Dorsolateral prefrontal cortex (tissue), 120 donors: ENCODE measurements at regions of chr5 and their contacts with region 1.

Region 1: DNA sequence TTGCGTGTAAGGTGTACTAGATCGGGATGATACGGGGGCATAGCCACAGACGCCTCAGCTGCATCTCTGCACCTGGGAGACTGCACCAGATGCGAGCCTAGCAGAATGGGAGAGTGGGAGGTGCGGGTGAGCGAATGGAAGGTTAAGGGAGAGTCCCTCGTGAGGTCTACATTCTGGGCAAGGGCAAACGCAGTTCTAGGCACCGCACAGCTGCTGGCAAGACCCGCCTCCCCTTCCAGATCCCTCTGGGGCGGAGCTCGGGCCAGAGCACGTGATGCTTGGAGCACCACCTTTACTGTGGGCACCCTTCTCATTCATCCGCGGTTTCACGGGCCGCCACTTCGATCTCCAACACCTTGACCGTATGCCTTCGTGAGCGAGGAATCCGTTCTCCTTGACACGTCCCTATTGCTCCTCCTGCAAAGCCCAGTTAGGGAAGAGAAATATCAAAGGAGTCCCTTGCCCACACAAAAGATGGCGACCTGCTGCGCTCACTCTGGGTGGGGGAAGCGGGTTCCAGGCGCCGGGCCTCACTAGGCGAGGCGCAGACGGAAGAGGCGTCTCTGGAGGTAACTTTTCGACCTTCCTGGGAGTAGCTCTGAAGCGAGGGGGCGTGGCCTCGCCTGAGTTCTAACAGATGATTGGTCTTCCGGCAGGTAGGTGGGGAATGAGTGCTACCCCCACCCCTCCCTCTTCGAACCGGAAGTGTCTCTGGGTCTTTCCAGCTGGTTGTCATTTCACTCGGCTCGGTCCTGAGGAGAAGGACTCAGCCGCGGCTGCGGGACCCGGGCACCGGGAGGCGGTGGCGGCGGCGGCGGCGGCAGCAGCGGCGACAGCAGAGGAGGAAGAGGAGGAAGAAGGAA is at the start of gene CPEB4:
- DNase-seq: peak; percentile 98 to 100 (median 100)
- H3K4me3 ChIP-seq: peak within 1 kb of the TSS; percentile 60 to 99 (median 91)
- H3K27ac ChIP-seq: peak within 1 kb of the TSS; percentile 84 to 100 (median 98)
- H3K27me3 ChIP-seq: no peaks in the 10 kb centered on the region
- CTCF ChIP-seq: peak in 18 of 56 donors; percentile 4 to 40 (median 26)
- total RNA-seq, gene CPEB4: 95.3 to 182 (median 133) TPM

Region 2: GRCh38 chr5:173781814-173782670 is 105.8 kb before region 1 on chr5:
- intact Hi-C with region 1: loop called (anchors 2 to 10 kb)
- DNase-seq: peak; percentile 56 to 94 (median 85)
- H3K4me3 ChIP-seq: peak overlapping the region in 15 of 59 donors; percentile 1 to 36 (median 11)
- H3K27ac ChIP-seq: peak overlapping the region; percentile 53 to 98 (median 87)
- H3K27me3 ChIP-seq: no peaks in the 10 kb centered on the region
- CTCF ChIP-seq: peak in 2 of 56 donors; percentile 9 to 10

Region 3: GRCh38 chr5:173853370-173854131 is 34.3 kb before region 1 on chr5:
- intact Hi-C with region 1: no loop called
- DNase-seq: no peak
- H3K4me3 ChIP-seq: no peak overlapping the region
- H3K27ac ChIP-seq: peak overlapping the region in 22 of 59 donors; percentile 3 to 74 (median 45)
- H3K27me3 ChIP-seq: no peaks in the 10 kb centered on the region
- CTCF ChIP-seq: no peak

Region 4: DNA sequence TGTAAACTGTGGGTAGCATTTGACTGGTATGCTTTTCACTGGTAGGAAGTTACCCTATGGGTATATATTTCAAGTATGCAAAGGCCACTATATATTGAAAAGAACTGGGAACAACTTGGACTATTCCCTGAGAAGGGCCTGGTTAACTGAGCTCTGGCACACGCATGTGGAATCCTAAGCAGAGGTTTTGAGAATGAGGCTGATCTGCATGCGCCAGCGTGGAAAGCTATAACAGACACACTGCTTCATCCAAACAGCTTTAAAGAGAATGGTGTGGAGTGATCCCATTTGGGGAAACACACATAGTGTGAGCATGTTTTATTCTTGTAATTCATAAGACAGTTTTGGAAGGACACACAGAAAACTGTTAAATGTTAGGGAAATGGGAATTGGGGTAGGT is 166.1 kb after region 1 on chr5:
- intact Hi-C with region 1: loop called in 1 of 2 experiments (anchors 5 kb)
- DNase-seq: peak in 2 of 10 donors; percentile 47
- H3K4me3 ChIP-seq: no peak overlapping the region
- H3K27ac ChIP-seq: peak overlapping the region in 14 of 59 donors; percentile 5 to 60 (median 34)
- H3K27me3 ChIP-seq: peaks cover 0 to 2% (median 0%) of the 10 kb centered on the region in 45 donors
- CTCF ChIP-seq: no peak

Region 5: GRCh38 chr5:174472956-174473355 is 585.1 kb after region 1 on chr5:
- intact Hi-C with region 1: no loop called
- DNase-seq: no peak
- H3K4me3 ChIP-seq: no peak overlapping the region
- H3K27ac ChIP-seq: no peak overlapping the region
- H3K27me3 ChIP-seq: no peaks in the 10 kb centered on the region
- CTCF ChIP-seq: no peak